Caco-2 (cell line): ENCODE measurements at regions of chr13 and their contacts with region 1.

Region 1: DNA sequence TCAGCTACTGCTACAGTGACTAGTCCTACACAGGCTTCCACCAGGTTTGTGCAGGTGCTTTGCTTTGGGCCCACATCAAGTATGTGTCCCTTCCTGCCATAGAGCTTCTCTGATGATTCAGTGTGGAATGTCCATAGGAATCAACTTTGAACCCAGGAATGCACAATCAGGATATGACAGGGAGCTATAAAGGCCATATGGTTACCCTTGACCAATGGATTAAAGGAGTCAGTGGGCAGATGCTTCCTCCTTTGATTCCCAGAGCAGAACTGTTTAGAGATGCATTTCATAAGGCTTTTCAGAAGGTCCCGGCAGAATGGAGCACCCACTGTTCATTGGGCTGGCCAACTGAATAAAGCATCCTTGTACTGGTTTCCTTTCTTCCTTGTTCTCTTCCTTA is 145.2 kb upstream of the WASF3 start:
- DNase-seq: peak in 1 of 2 experiments; percentile 20
- H3K4me3 ChIP-seq: no peak overlapping the region
- H3K4me3 Mint-ChIP-seq: no peak overlapping the region
- H3K27ac Mint-ChIP-seq: no peak overlapping the region
- H3K4me1 ChIP-seq: peaks cover 18% of the 10 kb centered on the region
- H3K4me1 Mint-ChIP-seq: peaks cover 15% of the 10 kb centered on the region
- H3K27me3 ChIP-seq: no peaks in the 10 kb centered on the region
- H3K27me3 Mint-ChIP-seq: no peaks in the 10 kb centered on the region
- CTCF ChIP-seq: no peak

Region 2: DNA sequence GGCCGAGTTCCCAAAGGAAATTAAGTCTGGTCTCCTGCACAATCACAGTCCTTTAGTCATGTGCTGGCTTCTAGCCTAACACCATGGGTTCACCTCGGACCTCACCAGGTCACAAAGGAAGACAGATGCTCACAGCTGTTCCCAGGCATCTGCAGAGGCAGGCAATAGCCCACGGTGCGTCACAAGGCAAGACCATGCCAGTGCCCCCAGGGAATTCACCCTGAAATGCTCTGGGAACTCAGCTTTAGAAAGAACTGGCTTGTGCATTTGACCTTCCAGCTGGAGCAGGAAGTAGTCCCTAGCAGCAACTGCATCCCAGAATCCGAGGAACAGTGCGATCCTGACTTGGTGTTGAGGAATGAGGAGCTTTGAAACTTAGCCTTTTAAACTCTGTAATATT is 48.4 kb after region 1 on chr13:
- CTCF ChIA-PET with region 1: no interaction called
- POLR2A ChIA-PET with region 1: no interaction called
- intact Hi-C with region 1: loop called (anchors 1 kb)
- DNase-seq: no peak
- H3K4me3 ChIP-seq: no peak overlapping the region
- H3K4me3 Mint-ChIP-seq: no peak overlapping the region
- H3K27ac Mint-ChIP-seq: no peak overlapping the region
- H3K4me1 ChIP-seq: no peaks in the 10 kb centered on the region
- H3K4me1 Mint-ChIP-seq: peaks cover 9% of the 10 kb centered on the region
- H3K27me3 ChIP-seq: no peaks in the 10 kb centered on the region
- H3K27me3 Mint-ChIP-seq: peaks cover 10% of the 10 kb centered on the region
- CTCF ChIP-seq: no peak

Region 3: DNA sequence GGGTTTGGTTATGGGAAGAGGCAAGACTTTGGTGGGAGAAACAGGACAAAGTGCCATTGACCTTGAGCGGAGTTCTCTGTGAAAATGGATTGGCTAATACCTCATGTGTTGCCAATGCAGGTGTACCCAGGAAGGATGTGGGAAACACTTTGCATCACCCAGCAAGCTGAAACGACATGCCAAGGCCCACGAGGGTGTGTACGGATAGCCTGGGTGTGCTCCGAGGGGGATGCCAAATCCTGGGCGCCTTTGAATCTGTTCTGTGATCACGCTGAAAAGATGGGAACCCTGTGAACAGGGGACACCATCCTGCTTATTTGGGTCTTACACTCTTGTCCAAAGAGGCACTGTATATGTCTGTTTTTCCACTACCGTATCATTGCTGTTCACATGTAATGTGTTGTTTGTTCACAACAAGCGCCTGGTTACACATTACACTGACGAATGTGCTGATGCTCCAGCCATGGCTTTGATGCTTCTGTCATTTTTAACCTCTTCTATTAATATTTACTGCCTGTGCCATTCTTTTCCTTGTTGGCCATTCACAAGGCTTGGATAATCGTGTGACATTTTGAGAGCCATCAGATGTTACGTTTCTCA is 1020.4 kb after region 1 on chr13:
- CTCF ChIA-PET with region 1: no interaction called
- POLR2A ChIA-PET with region 1: no interaction called
- intact Hi-C with region 1: no loop called
- DNase-seq: no peak
- H3K4me3 ChIP-seq: no peak overlapping the region
- H3K4me3 Mint-ChIP-seq: no peak overlapping the region
- H3K27ac Mint-ChIP-seq: no peak overlapping the region
- H3K4me1 ChIP-seq: no peaks in the 10 kb centered on the region
- H3K4me1 Mint-ChIP-seq: no peaks in the 10 kb centered on the region
- H3K27me3 ChIP-seq: no peaks in the 10 kb centered on the region
- H3K27me3 Mint-ChIP-seq: no peaks in the 10 kb centered on the region
- CTCF ChIP-seq: no peak